Dorsolateral prefrontal cortex (tissue), 120 donors: ENCODE measurements at regions of chr10 and their contacts with region 1.

Region 1: DNA sequence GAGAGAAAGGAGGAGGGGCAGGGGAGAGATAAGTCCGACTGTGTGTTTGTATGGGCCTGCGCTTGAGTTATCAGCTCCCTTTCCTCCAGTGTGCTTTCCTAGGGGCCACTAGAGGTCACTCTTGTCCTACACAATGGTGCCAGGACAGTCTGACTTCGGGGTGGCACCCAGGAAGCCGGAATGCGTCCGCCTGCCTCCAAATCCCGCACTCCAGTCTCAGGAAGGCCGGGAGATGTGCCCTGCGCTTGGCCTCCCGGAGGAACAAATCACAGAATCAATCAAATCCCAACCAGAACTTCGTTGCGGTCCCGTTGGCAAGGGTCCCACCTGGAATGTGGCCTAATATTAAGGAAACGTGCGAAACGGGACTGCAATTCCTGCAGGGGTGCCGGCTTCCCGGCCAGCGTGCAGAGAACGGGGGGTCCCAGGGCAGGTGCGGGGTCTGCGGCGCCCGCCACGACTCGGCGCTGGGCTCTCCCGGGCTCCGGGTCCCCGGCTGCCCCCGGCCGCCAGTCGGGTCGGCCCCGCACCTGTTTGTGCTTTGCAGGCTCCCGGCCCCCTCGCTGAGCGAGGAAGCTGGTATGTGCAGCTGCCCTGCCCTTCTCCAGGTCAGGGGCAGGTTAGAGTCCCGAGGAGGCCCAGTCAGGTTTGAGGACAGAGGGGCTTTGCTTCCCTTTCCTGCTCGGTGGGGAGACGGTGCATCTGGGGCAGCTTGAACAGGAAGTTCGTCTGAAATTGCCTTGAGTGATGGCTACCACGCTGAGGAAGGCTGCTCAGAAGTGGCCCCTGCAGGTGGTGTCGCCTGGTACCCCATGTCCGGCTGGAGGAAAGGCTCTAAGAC is 21.0 kb upstream of the HPS1 start:
- DNase-seq: peak; percentile 40 to 83 (median 75)
- H3K4me3 ChIP-seq: peak overlapping the region; percentile 27 to 77 (median 63)
- H3K27ac ChIP-seq: peak overlapping the region in 3 of 59 donors; percentile 36 to 65 (median 59)
- H3K27me3 ChIP-seq: peaks cover 0 to 5% (median 0%) of the 10 kb centered on the region in 45 donors
- CTCF ChIP-seq: peak; percentile 52 to 97 (median 86)

Region 2: GRCh38 chr10:97659589-97659988 is 808.1 kb before region 1 on chr10:
- intact Hi-C with region 1: no loop called
- DNase-seq: no peak
- H3K4me3 ChIP-seq: no peak overlapping the region
- H3K27ac ChIP-seq: no peak overlapping the region
- H3K27me3 ChIP-seq: no peaks in the 10 kb centered on the region
- CTCF ChIP-seq: no peak

Region 3: DNA sequence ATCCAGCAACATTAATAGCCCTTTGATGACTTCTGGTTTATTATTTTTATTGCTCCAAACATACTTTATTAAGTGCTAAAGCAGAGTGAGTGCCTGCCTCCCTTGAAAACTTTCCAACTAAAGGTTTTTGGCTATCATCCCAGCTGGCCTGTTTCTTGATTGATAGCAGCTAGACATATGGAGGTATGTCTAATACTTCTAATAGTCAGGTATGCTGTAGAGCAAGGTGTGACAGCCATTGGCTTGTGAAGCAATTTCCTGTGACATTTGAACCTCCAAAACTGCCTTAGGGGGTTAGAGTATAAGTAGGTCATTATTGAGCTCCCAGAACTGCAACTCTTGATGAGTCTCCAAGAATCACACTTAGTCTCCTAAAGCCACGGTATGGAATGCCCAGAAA is 255.5 kb before region 1 on chr10:
- intact Hi-C with region 1: no loop called
- DNase-seq: no peak
- H3K4me3 ChIP-seq: no peak overlapping the region
- H3K27ac ChIP-seq: no peak overlapping the region
- H3K27me3 ChIP-seq: no peaks in the 10 kb centered on the region
- CTCF ChIP-seq: no peak

Region 4: GRCh38 chr10:98664331-98665042 is 196.8 kb after region 1 on chr10:
- intact Hi-C with region 1: loop called in 1 of 2 experiments (anchors 5 kb)
- DNase-seq: no peak
- H3K4me3 ChIP-seq: no peak overlapping the region
- H3K27ac ChIP-seq: no peak overlapping the region
- H3K27me3 ChIP-seq: peaks cover 0 to 3% (median 0%) of the 10 kb centered on the region in 45 donors
- CTCF ChIP-seq: peak in 47 of 56 donors; percentile 12 to 60 (median 33)

Region 5: GRCh38 chr10:99172130-99172738 is 704.5 kb after region 1 on chr10:
- intact Hi-C with region 1: loop called in 1 of 2 experiments (anchors 10 kb)
- DNase-seq: peak in 4 of 10 donors; percentile 9 to 46 (median 37)
- H3K4me3 ChIP-seq: no peak overlapping the region
- H3K27ac ChIP-seq: no peak overlapping the region
- H3K27me3 ChIP-seq: peaks cover 0 to 9% (median 0%) of the 10 kb centered on the region in 45 donors
- CTCF ChIP-seq: peak in 54 of 56 donors; percentile 24 to 72 (median 51)

Region 6: GRCh38 chr10:99248824-99249223 is 781.1 kb after region 1 on chr10:
- intact Hi-C with region 1: loop called (anchors 1 to 5 kb)
- DNase-seq: no peak
- H3K4me3 ChIP-seq: no peak overlapping the region
- H3K27ac ChIP-seq: no peak overlapping the region
- H3K27me3 ChIP-seq: peaks cover 0 to 23% (median 0%) of the 10 kb centered on the region in 45 donors
- CTCF ChIP-seq: no peak